ENCODE measurements at regions of chr5 and their contacts with region 1.

Region 1: DNA sequence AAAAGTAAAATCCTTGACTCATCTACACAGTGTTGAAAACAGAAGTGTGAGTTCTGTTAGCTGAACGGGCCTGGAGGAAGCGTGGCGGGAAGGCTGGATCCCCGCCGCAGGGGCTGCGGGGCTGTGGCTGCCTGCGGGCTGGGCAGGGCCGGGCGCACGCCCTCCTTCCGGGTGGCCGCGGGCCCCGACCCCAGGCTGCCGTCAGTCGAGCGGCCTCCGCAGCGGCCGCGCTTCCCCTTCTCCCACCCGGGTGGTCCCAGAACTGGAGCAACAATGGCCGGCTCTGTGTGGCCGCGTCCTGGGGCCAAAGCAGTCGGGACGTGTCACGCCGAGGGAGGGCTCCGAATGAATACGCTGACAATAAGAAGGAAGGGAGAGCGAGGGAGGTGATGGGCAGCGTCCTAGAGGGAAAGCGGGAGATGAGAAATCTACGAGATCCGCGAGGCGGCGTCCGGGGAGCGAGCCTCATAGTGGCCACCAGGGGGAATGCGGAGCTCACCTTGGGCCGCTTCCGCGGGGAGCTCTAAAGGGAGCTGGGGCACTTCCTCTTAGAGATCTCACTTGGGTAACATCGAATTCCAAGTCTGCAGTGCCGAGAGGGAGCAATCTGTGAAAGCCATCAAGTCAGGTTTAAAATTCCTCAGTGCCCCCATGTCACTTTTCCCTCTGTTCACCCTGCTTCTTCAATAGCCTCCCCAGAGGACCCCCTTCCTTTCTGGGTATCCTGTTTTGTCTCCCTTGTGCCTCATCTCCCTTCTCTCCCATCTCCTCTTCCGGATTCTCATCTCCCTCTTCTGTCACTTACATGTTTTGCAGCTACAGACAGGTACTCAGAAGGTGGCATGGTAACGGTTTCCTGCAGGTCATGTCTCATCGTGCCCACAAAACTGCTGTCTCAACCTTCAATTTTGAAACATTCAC is 83.9 kb downstream of the SLC1A3 start:
- DNase-seq: peak; percentile 76
- ATAC-seq: peak; percentile 90
- H3K4me3 Mint-ChIP-seq: peak overlapping the region; percentile 75
- H3K27ac Mint-ChIP-seq: no peak overlapping the region
- H3K4me1 Mint-ChIP-seq: peaks cover 10% of the 10 kb centered on the region
- H3K27me3 Mint-ChIP-seq: peaks cover 22% of the 10 kb centered on the region

Region 2: GRCh38 chr5:36701085-36701698 is 10.9 kb after region 1 on chr5:
- CTCF ChIA-PET with region 1: interaction called, 18 read pairs
- POLR2A ChIA-PET with region 1: no interaction called
- DNase-seq: no peak
- ATAC-seq: no peak
- H3K4me3 Mint-ChIP-seq: no peak overlapping the region
- H3K27ac Mint-ChIP-seq: no peak overlapping the region
- H3K4me1 Mint-ChIP-seq: no peaks in the 10 kb centered on the region
- H3K27me3 Mint-ChIP-seq: peaks cover 3% of the 10 kb centered on the region